ENCODE measurements at regions of chr14 and their contacts with region 1.

Region 1: GRCh38 chr14:73503648-73504047 is 12.9 kb downstream of the RIOX1 start:
- DNase-seq: no peak
- H3K4me3 Mint-ChIP-seq: no peak overlapping the region
- H3K27ac Mint-ChIP-seq: no peak overlapping the region
- H3K4me1 Mint-ChIP-seq: peaks cover 2% of the 10 kb centered on the region
- H3K27me3 Mint-ChIP-seq: no peaks in the 10 kb centered on the region

Region 2: DNA sequence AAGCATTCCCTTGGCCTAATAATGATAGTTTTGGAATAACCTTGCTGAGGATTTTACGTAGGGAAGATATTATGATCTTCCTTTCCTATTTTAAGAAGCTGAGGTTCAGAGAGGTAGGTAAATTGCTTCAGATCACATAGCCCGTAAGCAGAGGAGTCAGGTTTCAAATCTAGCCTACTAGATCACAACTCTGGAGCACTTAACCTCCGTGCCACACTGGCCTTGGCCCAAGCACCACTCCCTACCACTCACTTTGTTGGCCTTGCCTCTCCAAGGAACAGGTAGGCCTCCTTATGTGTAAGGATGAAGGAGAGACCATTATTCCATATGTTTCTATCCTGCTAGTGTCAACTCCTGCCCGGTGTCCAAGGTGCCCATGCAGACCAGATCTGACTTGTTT is 20.8 kb after region 1 on chr14:
- CTCF ChIA-PET with region 1: interaction called, 14 read pairs
- DNase-seq: no peak
- H3K4me3 Mint-ChIP-seq: no peak overlapping the region
- H3K27ac Mint-ChIP-seq: no peak overlapping the region
- H3K4me1 Mint-ChIP-seq: no peaks in the 10 kb centered on the region
- H3K27me3 Mint-ChIP-seq: peaks cover 13% of the 10 kb centered on the region

Region 3: GRCh38 chr14:73568381-73568781 is 64.7 kb after region 1 on chr14:
- CTCF ChIA-PET with region 1: interaction called, 48 read pairs
- DNase-seq: no peak
- H3K4me3 Mint-ChIP-seq: peak overlapping the region; percentile 80
- H3K27ac Mint-ChIP-seq: peak overlapping the region; percentile 93
- H3K4me1 Mint-ChIP-seq: peaks cover 47% of the 10 kb centered on the region
- H3K27me3 Mint-ChIP-seq: no peaks in the 10 kb centered on the region

Region 4: GRCh38 chr14:73633116-73634010 is 129.7 kb after region 1 on chr14:
- CTCF ChIA-PET with region 1: interaction called, 47 read pairs
- DNase-seq: peak; percentile 66
- H3K4me3 Mint-ChIP-seq: peak overlapping the region; percentile 48
- H3K27ac Mint-ChIP-seq: no peak overlapping the region
- H3K4me1 Mint-ChIP-seq: peaks cover 5% of the 10 kb centered on the region
- H3K27me3 Mint-ChIP-seq: peaks cover 56% of the 10 kb centered on the region

Measured in activated naive CD4-positive, alpha-beta T cell treated with anti-CD3 and anti-CD28 coated beads, Interleukin-2, amount 10 ng/mL, durations not matched to agents 7 days and 5 days (primary cell).